ENCODE measurements at regions of chr11 and their contacts with region 1.

Region 1: GRCh38 chr11:95231127-95231880 is at the start of gene SESN3:
- DNase-seq: peak; percentile 99
- H3K4me3 ChIP-seq: peak within 1 kb of the TSS; percentile 81 to 89
- H3K4me3 Mint-ChIP-seq: peak within 1 kb of the TSS; percentile 92 to 99 (median 97)
- H3K27ac ChIP-seq: peak within 1 kb of the TSS; percentile 68
- H3K27ac Mint-ChIP-seq: peak within 1 kb of the TSS; percentile 85 to 96 (median 93)
- H3K4me1 ChIP-seq: peaks cover 50% of the 10 kb centered on the region
- H3K4me1 Mint-ChIP-seq: peaks cover 28 to 59% (median 34%) of the 10 kb centered on the region in 4 donors
- H3K27me3 ChIP-seq: no peaks in the 10 kb centered on the region
- H3K27me3 Mint-ChIP-seq: no peaks in the 10 kb centered on the region
- total RNA-seq, gene SESN3: 204 to 211 TPM

Region 2: GRCh38 chr11:95067039-95067840 is 164.1 kb before region 1 on chr11:
- CTCF ChIA-PET with region 1: interaction called, 12 read pairs
- POLR2A ChIA-PET with region 1: interaction called, 56 read pairs
- intact Hi-C with region 1: loop called (anchors 1 kb)
- DNase-seq: peak; percentile 72 to 80 (median 78)
- H3K4me3 ChIP-seq: peak overlapping the region; percentile 92 to 96
- H3K4me3 Mint-ChIP-seq: peak overlapping the region; percentile 94 to 98 (median 96)
- H3K27ac ChIP-seq: peak overlapping the region; percentile 95
- H3K27ac Mint-ChIP-seq: peak overlapping the region; percentile 94 to 98 (median 96)
- H3K4me1 ChIP-seq: peaks cover 32% of the 10 kb centered on the region
- H3K4me1 Mint-ChIP-seq: peaks cover 20 to 35% (median 29%) of the 10 kb centered on the region in 4 donors
- H3K27me3 ChIP-seq: no peaks in the 10 kb centered on the region
- H3K27me3 Mint-ChIP-seq: peaks cover 0 to 3% of the 10 kb centered on the region in 2 donors

Region 3: GRCh38 chr11:95100856-95101507 is 130.3 kb before region 1 on chr11:
- CTCF ChIA-PET with region 1: no interaction called
- POLR2A ChIA-PET with region 1: no interaction called
- intact Hi-C with region 1: no loop called
- DNase-seq: no peak
- H3K4me3 ChIP-seq: no peak overlapping the region
- H3K4me3 Mint-ChIP-seq: no peak overlapping the region
- H3K27ac ChIP-seq: no peak overlapping the region
- H3K27ac Mint-ChIP-seq: no peak overlapping the region
- H3K4me1 ChIP-seq: peaks cover 10% of the 10 kb centered on the region
- H3K4me1 Mint-ChIP-seq: peaks cover 11 to 19% (median 18%) of the 10 kb centered on the region in 4 donors
- H3K27me3 ChIP-seq: no peaks in the 10 kb centered on the region
- H3K27me3 Mint-ChIP-seq: no peaks in the 10 kb centered on the region

Region 4: DNA sequence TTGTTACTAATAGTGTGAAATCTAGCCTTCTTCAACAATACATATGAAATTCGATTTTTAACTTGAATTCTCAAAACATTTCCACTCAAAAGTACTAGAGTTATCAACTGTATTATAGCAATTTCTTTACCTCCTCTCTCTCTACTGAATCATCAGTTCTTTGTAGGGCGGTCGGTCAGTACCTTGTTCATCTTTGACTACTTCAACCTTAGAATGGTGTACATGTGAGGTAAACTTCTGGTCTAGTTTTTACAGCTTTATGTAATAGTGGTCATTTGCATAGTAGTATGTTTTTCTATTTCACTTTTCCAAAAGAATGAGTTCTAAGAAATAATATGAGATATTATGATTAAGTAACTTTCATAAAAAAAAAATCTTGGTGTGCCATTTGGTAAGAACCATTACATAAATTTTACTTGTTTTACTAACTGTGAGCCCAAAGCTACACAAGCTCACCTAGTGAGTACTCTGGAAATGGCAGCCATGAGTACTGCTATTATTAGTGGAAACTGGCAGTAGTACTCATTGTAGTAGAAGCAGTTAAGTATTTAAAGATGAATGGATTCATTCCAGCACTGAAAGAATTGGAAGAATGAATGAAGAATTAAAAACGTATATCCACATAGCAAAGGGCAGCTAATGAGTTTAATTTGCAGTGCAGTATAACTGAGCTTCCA is 30.4 kb before region 1 on chr11:
- CTCF ChIA-PET with region 1: interaction called, 3 read pairs
- POLR2A ChIA-PET with region 1: interaction called, 18 read pairs
- intact Hi-C with region 1: no loop called
- DNase-seq: no peak
- H3K4me3 ChIP-seq: no peak overlapping the region
- H3K4me3 Mint-ChIP-seq: no peak overlapping the region
- H3K27ac ChIP-seq: no peak overlapping the region
- H3K27ac Mint-ChIP-seq: no peak overlapping the region
- H3K4me1 ChIP-seq: peaks cover 14% of the 10 kb centered on the region
- H3K4me1 Mint-ChIP-seq: peaks cover 34 to 68% (median 42%) of the 10 kb centered on the region in 4 donors
- H3K27me3 ChIP-seq: no peaks in the 10 kb centered on the region
- H3K27me3 Mint-ChIP-seq: no peaks in the 10 kb centered on the region

Region 5: DNA sequence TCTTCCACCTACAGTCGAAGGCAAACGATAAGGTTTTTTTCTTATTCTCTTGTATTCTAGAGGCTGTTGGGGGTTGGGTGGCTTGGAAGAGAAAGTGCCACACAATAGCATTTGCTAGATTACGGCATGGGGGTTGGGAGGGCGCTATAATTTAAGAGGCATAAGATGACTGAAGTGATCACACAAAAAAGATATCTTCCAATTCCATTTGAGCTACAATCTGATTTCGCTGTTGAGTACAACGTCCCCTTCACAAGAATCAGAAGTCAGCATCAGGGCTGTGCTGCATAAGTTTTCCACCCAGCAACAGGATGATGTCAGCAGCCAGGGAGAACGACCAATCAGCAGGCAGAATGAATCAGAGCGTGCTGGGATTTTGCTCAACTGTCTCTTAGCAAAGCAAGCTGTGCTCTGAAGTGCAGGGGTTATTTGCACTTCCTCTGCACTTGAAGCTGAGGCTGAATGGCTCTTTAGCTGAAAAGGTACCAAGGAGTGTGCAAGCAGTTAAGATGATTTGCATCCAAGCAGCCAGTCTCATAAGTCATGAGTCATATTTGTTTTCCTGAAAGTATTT is 22.9 kb after region 1 on chr11:
- CTCF ChIA-PET with region 1: interaction called, 26 read pairs
- POLR2A ChIA-PET with region 1: interaction called, 127 read pairs
- intact Hi-C with region 1: loop called (anchors 1 kb)
- DNase-seq: peak; percentile 79 to 88 (median 81)
- H3K4me3 ChIP-seq: peak overlapping the region; percentile 26 to 36
- H3K4me3 Mint-ChIP-seq: peak overlapping the region; percentile 88 to 96 (median 92)
- H3K27ac ChIP-seq: peak overlapping the region; percentile 49
- H3K27ac Mint-ChIP-seq: peak overlapping the region; percentile 91 to 99 (median 95)
- H3K4me1 ChIP-seq: peaks cover 38% of the 10 kb centered on the region
- H3K4me1 Mint-ChIP-seq: peaks cover 23 to 42% (median 36%) of the 10 kb centered on the region in 4 donors
- H3K27me3 ChIP-seq: no peaks in the 10 kb centered on the region
- H3K27me3 Mint-ChIP-seq: peaks cover 0 to 2% of the 10 kb centered on the region in 2 donors

Region 6: DNA sequence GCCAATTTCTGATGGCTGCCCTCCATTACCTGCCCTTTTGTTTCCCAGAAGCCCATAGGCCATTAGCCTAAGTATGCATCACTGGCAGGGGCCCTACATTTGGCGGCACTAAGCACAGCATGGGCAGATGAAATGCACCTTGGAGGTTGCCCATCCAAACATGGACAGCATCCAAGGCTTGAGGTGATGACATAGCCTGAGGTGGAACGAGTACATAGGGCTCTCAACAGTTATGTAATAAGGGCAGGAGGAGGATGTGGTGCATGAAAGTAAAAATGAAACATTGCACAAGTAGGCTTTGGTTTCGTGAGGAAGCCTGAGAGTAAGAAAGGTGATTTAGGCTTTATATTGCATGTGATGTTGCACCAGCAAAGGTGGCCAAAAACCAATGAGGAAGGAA is 410.2 kb after region 1 on chr11:
- CTCF ChIA-PET with region 1: interaction called, 4 read pairs
- POLR2A ChIA-PET with region 1: interaction called, 12 read pairs
- intact Hi-C with region 1: no loop called
- DNase-seq: peak; percentile 42 to 57 (median 50)
- H3K4me3 ChIP-seq: no peak overlapping the region
- H3K4me3 Mint-ChIP-seq: peak overlapping the region in 7 of 8 donors; percentile 37 to 72 (median 65)
- H3K27ac ChIP-seq: peak overlapping the region; percentile 11
- H3K27ac Mint-ChIP-seq: peak overlapping the region; percentile 65 to 94 (median 88)
- H3K4me1 ChIP-seq: peaks cover 17% of the 10 kb centered on the region
- H3K4me1 Mint-ChIP-seq: peaks cover 9 to 21% (median 15%) of the 10 kb centered on the region in 4 donors
- H3K27me3 ChIP-seq: no peaks in the 10 kb centered on the region
- H3K27me3 Mint-ChIP-seq: no peaks in the 10 kb centered on the region

Region 7: DNA sequence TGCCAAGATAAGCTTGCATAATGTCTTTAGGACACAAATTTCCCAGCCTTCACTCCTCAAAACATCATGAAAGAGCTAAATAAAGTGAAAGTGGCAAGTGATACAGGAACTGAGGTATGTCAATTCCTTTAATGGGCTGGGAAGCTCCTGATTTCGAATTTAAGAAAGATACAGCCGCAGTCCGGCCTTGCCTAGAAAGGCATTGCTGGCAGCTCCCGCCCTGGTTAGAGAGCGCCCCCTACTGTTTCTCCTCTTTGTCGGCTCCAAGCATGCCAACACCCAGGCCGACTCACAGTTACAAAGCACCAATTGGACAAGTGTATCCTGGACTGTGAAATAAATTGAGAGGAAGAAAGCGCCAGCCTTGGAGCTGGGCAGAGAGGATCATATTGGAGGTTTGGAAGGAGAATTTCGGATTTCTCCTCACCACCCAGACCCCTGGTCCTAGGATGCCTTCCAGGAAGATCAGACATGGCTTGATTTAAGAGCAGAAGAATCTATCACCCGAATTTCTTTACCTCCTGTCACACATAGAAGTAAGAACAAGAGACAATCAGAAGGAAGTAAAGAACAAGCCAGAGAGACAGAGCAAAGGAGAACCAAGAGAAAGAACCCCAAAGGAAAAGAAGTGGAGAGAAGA is 474.3 kb after region 1 on chr11:
- CTCF ChIA-PET with region 1: interaction called, 102 read pairs
- POLR2A ChIA-PET with region 1: interaction called, 241 read pairs
- intact Hi-C with region 1: loop called (anchors 1 kb)
- DNase-seq: peak; percentile 84 to 87 (median 85)
- H3K4me3 ChIP-seq: no peak overlapping the region
- H3K4me3 Mint-ChIP-seq: no peak overlapping the region
- H3K27ac ChIP-seq: no peak overlapping the region
- H3K27ac Mint-ChIP-seq: no peak overlapping the region
- H3K4me1 ChIP-seq: peaks cover 48% of the 10 kb centered on the region
- H3K4me1 Mint-ChIP-seq: peaks cover 6 to 10% (median 9%) of the 10 kb centered on the region in 4 donors
- H3K27me3 ChIP-seq: no peaks in the 10 kb centered on the region
- H3K27me3 Mint-ChIP-seq: peaks cover 0 to 3% of the 10 kb centered on the region in 2 donors